Activated CD4-positive, alpha-beta memory T cell treated with anti-CD3 and anti-CD28 coated beads for 36 hours (primary cell): ENCODE measurements at regions of chr12 and their contacts with region 1.

Region 1: GRCh38 chr12:15789220-15790171 is at the start of gene EPS8:
- DNase-seq: peak; percentile 91
- H3K4me3 Mint-ChIP-seq: peak within 1 kb of the TSS; percentile 79
- H3K27ac Mint-ChIP-seq: peak within 1 kb of the TSS; percentile 15
- H3K4me1 Mint-ChIP-seq: peaks cover 14% of the 10 kb centered on the region
- H3K27me3 Mint-ChIP-seq: peaks cover 33% of the 10 kb centered on the region
- total RNA-seq, gene EPS8: 3.2 to 3.5 TPM

Region 2: GRCh38 chr12:15590180-15590826 is 199.2 kb before region 1 on chr12:
- CTCF ChIA-PET with region 1: interaction called, 5 read pairs
- POLR2A ChIA-PET with region 1: no interaction called
- intact Hi-C with region 1: loop called (anchors 2 kb)
- DNase-seq: peak; percentile 56
- H3K4me3 Mint-ChIP-seq: peak overlapping the region; percentile 70
- H3K27ac Mint-ChIP-seq: peak overlapping the region; percentile 21
- H3K4me1 Mint-ChIP-seq: peaks cover 8% of the 10 kb centered on the region
- H3K27me3 Mint-ChIP-seq: no peaks in the 10 kb centered on the region

Region 3: GRCh38 chr12:15757553-15758265 is 31.8 kb before region 1 on chr12:
- CTCF ChIA-PET with region 1: no interaction called
- POLR2A ChIA-PET with region 1: no interaction called
- intact Hi-C with region 1: no loop called
- DNase-seq: peak; percentile 24
- H3K4me3 Mint-ChIP-seq: no peak overlapping the region
- H3K27ac Mint-ChIP-seq: no peak overlapping the region
- H3K4me1 Mint-ChIP-seq: peaks cover 2% of the 10 kb centered on the region
- H3K27me3 Mint-ChIP-seq: no peaks in the 10 kb centered on the region

Region 4: GRCh38 chr12:15882118-15882971 is 92.8 kb after region 1 on chr12 and contains the start of gene STRAP:
- CTCF ChIA-PET with region 1: no interaction called
- POLR2A ChIA-PET with region 1: interaction called, 3 read pairs
- intact Hi-C with region 1: loop called (anchors 1 kb)
- DNase-seq: peak; percentile 98
- H3K4me3 Mint-ChIP-seq: peak within 1 kb of the TSS; percentile 96
- H3K27ac Mint-ChIP-seq: peak within 1 kb of the TSS; percentile 94
- H3K4me1 Mint-ChIP-seq: peaks cover 48% of the 10 kb centered on the region
- H3K27me3 Mint-ChIP-seq: no peaks in the 10 kb centered on the region
- total RNA-seq, gene STRAP: 135 to 140 TPM